Activated CD4-positive, alpha-beta T cell treated with anti-CD3 and anti-CD28 coated beads, Interleukin-2, amount 10 ng/mL, durations not matched to agents 24 days and 14 days (primary cell): ENCODE measurements at regions of chr1 and their contacts with region 1.

Region 1: DNA sequence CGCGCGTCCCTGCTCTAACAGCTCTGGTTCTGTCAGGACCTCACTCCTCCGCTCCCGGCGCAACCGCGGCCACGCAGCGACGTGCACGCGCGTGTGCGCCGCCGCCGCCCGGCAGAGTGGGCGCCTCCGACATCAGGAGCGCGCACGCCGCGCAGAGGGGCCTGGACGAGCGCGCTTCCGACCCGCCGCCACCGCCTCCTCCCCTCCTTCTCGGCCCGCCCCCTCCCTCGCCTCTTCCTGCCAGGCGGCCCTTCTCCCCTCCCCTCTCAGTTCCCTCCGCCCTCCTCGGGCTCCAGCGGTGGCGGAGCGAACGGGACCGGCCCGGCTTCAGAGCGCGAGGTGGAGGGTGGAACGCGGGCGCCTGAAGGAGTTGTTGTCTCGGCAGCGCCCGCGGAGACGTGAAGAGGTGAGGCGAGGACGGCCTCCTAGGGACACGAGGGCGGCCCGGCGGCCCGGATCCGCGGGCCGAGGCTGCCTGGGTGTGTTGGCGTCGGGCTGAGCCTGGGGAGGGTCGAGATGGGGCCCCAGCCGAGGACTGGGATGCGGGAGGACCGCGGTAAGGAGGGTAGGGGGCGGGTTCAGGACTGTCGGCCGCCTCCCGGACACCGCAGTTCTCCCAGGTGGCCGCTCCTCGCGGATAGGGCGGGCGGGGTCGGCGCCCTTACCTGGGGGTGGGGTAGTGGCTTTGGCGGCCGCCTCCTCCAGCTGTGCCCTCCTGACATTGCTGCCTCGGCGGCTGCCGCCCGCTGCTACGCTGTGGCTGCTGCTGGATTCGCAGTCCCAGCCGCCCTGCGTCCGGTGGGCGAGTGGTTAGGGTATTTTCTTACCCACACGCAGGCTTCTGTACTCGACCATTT is at the start of gene RABGAP1L:
- DNase-seq: peak; percentile 98
- H3K4me3 Mint-ChIP-seq: peak within 1 kb of the TSS; percentile 93
- H3K27ac Mint-ChIP-seq: peak within 1 kb of the TSS; percentile 98
- H3K4me1 Mint-ChIP-seq: peaks cover 52% of the 10 kb centered on the region
- H3K27me3 Mint-ChIP-seq: no peaks in the 10 kb centered on the region
- total RNA-seq, gene RABGAP1L: 36.9 and 37.2 TPM in 2 replicates

Region 2: DNA sequence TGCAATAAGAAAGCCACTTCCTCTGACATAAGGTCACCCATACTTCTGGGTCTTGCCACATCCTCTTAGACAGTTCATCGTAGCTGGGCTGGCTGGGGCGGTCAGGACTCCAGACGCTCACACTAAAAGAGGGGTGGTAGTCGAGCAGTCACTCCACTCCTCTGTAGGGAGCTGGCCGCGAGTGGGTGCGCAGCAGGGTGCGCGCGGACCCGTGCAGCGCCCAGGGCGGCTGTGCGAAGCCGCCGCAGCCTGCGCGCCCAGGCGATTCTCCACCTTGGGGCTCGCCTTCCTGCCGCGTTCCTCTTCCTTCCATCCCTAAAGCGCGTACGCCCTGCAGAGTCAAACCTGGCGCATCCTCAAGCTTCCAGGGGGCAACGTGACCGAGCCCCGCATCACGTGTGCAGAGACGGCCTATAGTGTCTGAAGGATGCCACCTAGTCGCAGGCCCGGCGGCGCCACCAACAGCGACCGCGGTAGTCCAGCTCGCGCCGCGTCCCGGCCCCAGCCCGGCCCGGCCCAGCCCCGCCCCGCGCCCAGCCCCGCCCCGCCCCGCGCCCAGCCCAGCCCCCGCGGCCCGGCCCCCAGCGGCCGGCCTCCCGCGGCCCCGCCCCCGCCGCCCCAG is 682.7 kb before region 1 on chr1:
- intact Hi-C with region 1: loop called (anchors 5 kb)
- DNase-seq: peak; percentile 92
- H3K4me3 Mint-ChIP-seq: peak overlapping the region; percentile 92
- H3K27ac Mint-ChIP-seq: peak overlapping the region; percentile 96
- H3K4me1 Mint-ChIP-seq: peaks cover 48% of the 10 kb centered on the region
- H3K27me3 Mint-ChIP-seq: no peaks in the 10 kb centered on the region

Region 3: GRCh38 chr1:173824331-173825081 is 335.0 kb before region 1 on chr1 and contains the starts of genes CENPL and DARS2:
- intact Hi-C with region 1: loop called (anchors 2 kb)
- DNase-seq: peak; percentile 97
- H3K4me3 Mint-ChIP-seq: peak within 1 kb of the TSS; percentile 99
- H3K27ac Mint-ChIP-seq: peak within 1 kb of the TSS; percentile 98
- H3K4me1 Mint-ChIP-seq: peaks cover 49% of the 10 kb centered on the region
- H3K27me3 Mint-ChIP-seq: no peaks in the 10 kb centered on the region
- total RNA-seq, gene CENPL: 23.2 and 24.4 TPM in 2 replicates
- total RNA-seq, gene DARS2: 47.6 and 52.2 TPM in 2 replicates

Region 4: GRCh38 chr1:174174461-174175329 is 15.2 kb after region 1 on chr1:
- intact Hi-C with region 1: loop called (anchors 2 kb)
- DNase-seq: no peak
- H3K4me3 Mint-ChIP-seq: no peak overlapping the region
- H3K27ac Mint-ChIP-seq: peak overlapping the region; percentile 59
- H3K4me1 Mint-ChIP-seq: peaks cover 6% of the 10 kb centered on the region
- H3K27me3 Mint-ChIP-seq: no peaks in the 10 kb centered on the region

Region 5: DNA sequence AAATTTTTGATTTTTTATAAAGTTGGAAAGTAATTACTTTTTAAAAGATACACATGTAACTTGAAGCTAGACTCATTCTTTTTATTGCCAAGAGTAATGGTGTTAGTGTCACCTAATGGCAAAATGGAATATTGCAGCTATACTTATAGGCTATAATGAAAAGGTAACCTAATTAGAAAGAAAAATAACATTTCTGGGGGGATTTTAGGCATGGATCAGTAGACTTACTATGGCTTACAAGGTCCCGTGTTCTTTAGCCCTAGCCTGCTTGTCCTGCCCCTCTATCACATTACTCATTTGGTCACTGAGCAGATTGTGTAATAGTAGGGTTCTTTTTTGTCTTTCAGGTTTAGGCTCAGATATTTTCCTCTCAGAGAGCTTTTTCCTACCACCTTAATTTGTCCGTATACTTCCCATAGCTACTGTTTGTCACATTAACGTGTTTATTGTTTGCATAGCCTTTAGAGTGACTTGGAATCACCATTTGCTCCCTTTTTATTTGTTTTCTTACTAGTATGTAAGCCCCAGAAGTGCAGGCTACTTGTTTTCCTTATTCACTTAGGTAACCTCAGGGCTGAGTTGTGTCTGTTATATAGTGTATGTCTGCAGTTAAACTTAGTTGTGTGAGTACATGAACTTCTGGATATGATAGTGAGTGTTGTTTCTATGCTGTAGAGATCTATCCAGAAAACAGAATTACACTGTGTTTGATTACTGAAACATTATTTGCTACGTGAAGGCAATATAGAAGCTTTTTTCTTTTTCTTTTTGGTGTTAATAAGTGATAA is 58.5 kb after region 1 on chr1:
- intact Hi-C with region 1: loop called (anchors 1 kb)
- DNase-seq: peak; percentile 57
- H3K4me3 Mint-ChIP-seq: no peak overlapping the region
- H3K27ac Mint-ChIP-seq: no peak overlapping the region
- H3K4me1 Mint-ChIP-seq: no peaks in the 10 kb centered on the region
- H3K27me3 Mint-ChIP-seq: no peaks in the 10 kb centered on the region